Activated naive CD4-positive, alpha-beta T cell treated with anti-CD3 and anti-CD28 coated beads, Interleukin-2, amount 10 ng/mL, durations not matched to agents 7 days and 5 days (primary cell): ENCODE measurements at regions of chr2 and their contacts with region 1.

Region 1: DNA sequence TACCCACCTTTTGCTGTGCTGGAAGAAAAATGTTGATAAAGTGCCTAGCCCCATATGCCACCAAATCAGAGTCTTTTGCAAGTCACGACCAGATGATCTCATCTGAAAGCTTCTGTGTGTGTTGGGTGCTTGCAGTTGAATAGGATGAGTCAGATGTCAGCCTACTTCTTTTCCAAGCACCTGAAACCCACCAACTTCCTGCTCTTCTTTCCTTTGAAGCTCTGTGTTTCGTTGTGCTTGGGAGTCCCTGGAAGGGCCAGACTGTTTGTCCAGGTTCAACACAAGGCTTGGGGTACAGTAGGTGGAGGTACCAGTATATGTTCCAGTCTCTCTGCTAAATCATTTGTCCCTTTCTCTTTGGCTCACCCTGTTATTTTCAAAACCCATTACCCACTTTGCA is 36.8 kb upstream of the LCLAT1 start:
- DNase-seq: no peak
- H3K4me3 Mint-ChIP-seq: no peak overlapping the region
- H3K27ac Mint-ChIP-seq: no peak overlapping the region
- H3K4me1 Mint-ChIP-seq: peaks cover 31% of the 10 kb centered on the region
- H3K27me3 Mint-ChIP-seq: peaks cover 5% of the 10 kb centered on the region

Region 2: DNA sequence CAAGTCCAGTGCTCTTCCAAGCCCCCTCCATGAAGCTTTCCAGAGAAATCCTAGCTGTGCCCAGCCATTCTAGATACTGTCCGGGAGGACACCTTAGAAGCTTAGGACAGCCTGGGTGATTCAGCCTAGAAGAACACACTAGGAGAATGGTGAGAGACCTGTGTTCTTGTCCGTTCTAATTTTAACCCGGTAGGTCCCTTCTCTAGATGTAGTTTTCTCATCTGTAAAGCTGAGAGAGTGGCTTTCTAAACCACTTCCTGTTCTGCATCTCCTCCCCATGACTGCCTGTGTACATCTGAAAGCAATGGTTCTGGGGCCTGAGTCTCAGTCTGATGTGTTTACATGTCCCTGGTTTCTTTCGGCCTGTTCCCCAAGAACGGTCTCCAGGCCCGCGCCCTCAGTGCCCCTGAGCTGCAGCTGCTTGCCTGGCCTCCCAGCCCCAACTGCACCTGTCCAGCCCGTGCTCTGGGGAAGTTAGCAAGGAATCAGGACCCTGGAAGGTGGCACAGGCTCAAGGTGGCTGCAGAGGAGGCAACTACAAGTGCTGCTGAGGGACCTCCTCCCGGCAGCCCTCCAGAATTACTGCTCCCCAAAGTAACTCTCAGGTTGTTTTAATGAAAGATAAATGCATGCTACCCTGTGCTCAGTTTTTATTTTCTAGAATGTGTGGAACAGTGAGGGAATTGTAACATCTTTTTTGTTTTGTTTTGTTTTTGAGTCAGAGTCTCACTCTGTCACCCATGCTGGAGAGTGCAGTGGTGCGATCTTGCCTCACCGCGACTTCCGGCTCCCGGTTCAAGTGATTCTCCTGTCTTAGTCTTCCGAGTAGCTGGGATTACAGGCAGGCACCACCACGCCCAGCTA is 73.0 kb before region 1 on chr2:
- CTCF ChIA-PET with region 1: no interaction called
- DNase-seq: peak; percentile 74
- H3K4me3 Mint-ChIP-seq: peak overlapping the region; percentile 72
- H3K27ac Mint-ChIP-seq: peak overlapping the region; percentile 99
- H3K4me1 Mint-ChIP-seq: peaks cover 72% of the 10 kb centered on the region
- H3K27me3 Mint-ChIP-seq: no peaks in the 10 kb centered on the region

Region 3: GRCh38 chr2:30373881-30374302 is 36.3 kb before region 1 on chr2:
- CTCF ChIA-PET with region 1: no interaction called
- DNase-seq: no peak
- H3K4me3 Mint-ChIP-seq: no peak overlapping the region
- H3K27ac Mint-ChIP-seq: no peak overlapping the region
- H3K4me1 Mint-ChIP-seq: no peaks in the 10 kb centered on the region
- H3K27me3 Mint-ChIP-seq: peaks cover 9% of the 10 kb centered on the region

Region 4: DNA sequence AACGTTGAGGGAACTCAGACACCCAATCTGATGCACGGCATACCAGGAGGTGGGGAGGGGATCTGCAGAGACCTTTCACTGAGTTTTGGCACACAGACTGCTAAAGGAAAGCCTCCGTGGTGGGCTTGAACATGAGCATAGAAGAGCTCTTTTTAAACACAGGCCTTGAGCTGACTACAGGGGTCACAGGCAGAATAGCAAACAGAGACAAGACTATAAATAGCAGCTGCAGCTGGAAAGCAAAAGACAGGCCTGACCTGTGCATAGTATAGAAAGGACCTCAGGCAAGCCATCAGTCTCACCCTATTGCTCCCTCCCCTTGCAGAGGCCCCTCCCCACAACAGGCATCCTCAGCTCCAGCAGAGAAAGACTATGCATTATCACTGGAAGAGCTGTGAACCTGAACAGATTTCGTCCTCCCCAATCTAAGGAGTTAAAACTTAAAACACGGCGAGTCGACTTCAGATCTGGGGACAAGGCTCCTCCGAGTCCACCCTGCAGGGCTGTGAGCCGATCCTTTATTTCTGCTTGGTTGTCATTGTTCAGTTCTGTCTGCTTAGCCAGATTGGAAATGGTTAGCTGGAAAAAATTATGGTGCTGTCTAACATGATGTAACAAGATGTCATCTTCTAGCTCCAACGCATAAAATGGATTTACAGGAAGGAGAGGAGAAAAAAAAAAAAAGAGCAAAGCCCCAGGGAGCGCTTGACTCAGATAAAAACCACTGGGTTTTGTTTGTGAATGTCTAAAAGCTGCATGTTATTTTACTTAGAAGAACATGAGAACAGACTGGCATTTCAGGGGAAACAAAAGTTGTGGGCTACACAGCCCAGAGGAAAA is 11.6 kb after region 1 on chr2:
- CTCF ChIA-PET with region 1: interaction called, 10 read pairs
- DNase-seq: peak; percentile 39
- H3K4me3 Mint-ChIP-seq: peak overlapping the region; percentile 15
- H3K27ac Mint-ChIP-seq: peak overlapping the region; percentile 83
- H3K4me1 Mint-ChIP-seq: peaks cover 38% of the 10 kb centered on the region
- H3K27me3 Mint-ChIP-seq: no peaks in the 10 kb centered on the region

Region 5: GRCh38 chr2:30447149-30448045 is 37.2 kb after region 1 on chr2 and contains the start of gene LCLAT1:
- CTCF ChIA-PET with region 1: no interaction called
- DNase-seq: peak; percentile 90
- H3K4me3 Mint-ChIP-seq: peak within 1 kb of the TSS; percentile 95
- H3K27ac Mint-ChIP-seq: peak within 1 kb of the TSS; percentile 94
- H3K4me1 Mint-ChIP-seq: peaks cover 28% of the 10 kb centered on the region
- H3K27me3 Mint-ChIP-seq: peaks cover 4% of the 10 kb centered on the region

Region 6: DNA sequence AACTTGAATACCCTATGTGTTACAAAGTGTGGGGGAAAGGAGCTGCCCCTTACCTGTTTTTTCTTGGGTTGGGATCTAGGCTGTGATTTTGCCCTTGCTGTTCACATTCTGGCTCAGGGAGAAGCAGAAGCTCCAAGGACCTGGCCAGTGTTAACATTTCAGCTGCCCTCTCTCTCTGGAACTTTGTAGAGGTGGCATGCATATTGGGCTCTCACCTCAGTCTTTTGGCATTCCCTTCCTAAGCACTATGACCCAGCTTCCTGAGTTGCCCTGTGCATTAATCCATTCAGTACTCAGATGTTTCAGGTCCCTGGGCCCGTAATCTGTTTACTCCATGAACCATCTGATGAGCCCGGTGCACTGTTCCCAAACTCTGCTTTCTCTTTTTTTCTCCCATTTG is 48.9 kb after region 1 on chr2:
- CTCF ChIA-PET with region 1: no interaction called
- DNase-seq: no peak
- H3K4me3 Mint-ChIP-seq: no peak overlapping the region
- H3K27ac Mint-ChIP-seq: no peak overlapping the region
- H3K4me1 Mint-ChIP-seq: peaks cover 6% of the 10 kb centered on the region
- H3K27me3 Mint-ChIP-seq: no peaks in the 10 kb centered on the region